ENCODE measurements at regions of chr5 and their contacts with region 1.

Region 1: DNA sequence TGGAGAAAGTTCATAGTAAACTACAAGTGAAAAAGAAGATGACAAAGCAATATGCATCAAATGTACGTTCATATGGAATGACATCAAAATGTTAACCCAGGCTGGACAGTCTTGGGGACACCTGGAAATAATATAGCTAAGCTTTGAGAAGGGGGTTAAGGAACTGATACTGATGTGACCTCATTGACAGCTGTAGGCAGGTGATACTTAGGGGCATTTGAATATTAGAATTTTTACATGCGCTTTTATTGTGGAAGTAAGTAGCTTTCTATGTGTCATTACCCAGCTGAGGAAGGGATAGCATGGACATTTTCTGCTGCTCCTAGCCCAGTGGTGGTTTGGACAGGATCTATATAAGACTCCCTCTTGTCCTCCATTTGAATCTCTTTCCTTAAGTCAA is 299.7 kb downstream of the CWC27 start:
- DNase-seq: peak; percentile 72
- H3K4me3 ChIP-seq: peak overlapping the region; percentile 4
- H3K27ac ChIP-seq: peak overlapping the region; percentile 70
- H3K4me1 ChIP-seq: peaks cover 98% of the 10 kb centered on the region
- CTCF ChIP-seq: no peak

Region 2: GRCh38 chr5:65035211-65036206 is 32.9 kb before region 1 on chr5:
- CTCF ChIA-PET with region 1: interaction called, 4 read pairs
- POLR2A ChIA-PET with region 1: interaction called, 57 read pairs
- intact Hi-C with region 1: loop called (anchors 1 kb)
- DNase-seq: peak; percentile 76
- H3K4me3 ChIP-seq: peak overlapping the region; percentile 66
- H3K27ac ChIP-seq: peak overlapping the region; percentile 80
- H3K4me1 ChIP-seq: peaks cover 63% of the 10 kb centered on the region
- CTCF ChIP-seq: peak; percentile 29; the same call in 1 of the 2 replicates

Region 3: DNA sequence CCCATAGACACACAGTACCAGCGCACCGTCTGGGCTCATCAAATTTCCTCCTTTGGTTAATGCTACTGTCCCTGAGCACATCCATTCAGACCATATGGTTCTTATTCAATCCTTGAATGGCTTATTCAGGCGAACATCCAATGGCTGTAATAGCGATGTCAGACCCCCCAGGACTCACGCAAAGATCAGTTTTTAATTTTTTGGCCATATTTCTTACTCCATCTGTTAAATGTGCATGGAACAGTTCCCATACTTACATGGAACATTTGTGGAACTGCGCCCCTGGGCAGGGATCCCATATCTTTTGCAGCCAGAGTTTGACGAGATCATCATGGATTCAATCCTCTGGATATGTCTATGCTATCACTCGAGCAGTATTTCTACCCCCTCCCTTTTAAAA is 200.1 kb after region 1 on chr5:
- CTCF ChIA-PET with region 1: no interaction called
- POLR2A ChIA-PET with region 1: no interaction called
- intact Hi-C with region 1: no loop called
- DNase-seq: no peak
- H3K4me3 ChIP-seq: no peak overlapping the region
- H3K27ac ChIP-seq: no peak overlapping the region
- H3K4me1 ChIP-seq: no peaks in the 10 kb centered on the region
- CTCF ChIP-seq: no peak

Region 4: GRCh38 chr5:65326922-65327321 is 258.5 kb after region 1 on chr5:
- CTCF ChIA-PET with region 1: no interaction called
- POLR2A ChIA-PET with region 1: no interaction called
- intact Hi-C with region 1: no loop called
- DNase-seq: no peak
- H3K4me3 ChIP-seq: no peak overlapping the region
- H3K27ac ChIP-seq: no peak overlapping the region
- H3K4me1 ChIP-seq: no peaks in the 10 kb centered on the region
- CTCF ChIP-seq: no peak